ENCODE measurements at regions of chr7 and their contacts with region 1.

Region 1: DNA sequence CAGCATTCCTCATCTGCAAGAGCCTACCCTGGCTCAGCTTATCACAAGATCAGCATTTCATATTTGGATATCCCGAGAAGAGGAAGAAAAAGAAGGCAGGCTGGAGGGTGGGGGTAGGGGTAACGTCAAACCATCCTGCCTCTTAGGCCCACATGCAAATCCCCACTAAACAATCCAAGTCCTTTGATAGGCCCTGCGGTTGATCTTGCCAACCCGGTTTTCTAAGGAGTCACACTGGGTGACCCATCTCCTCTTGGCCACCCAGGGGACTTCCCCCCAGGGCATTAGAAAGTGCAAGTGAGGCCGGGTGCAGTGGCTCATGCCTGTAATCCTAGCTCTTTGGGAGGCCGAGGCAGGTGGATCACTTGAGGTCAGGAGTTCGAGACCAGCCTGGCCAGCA is 128.0 kb upstream of the CALN1 start:
- DNase-seq: no peak
- H3K4me3 ChIP-seq: no peak overlapping the region
- H3K27ac ChIP-seq: no peak overlapping the region
- H3K4me1 ChIP-seq: no peaks in the 10 kb centered on the region
- H3K27me3 ChIP-seq: no peaks in the 10 kb centered on the region
- CTCF ChIP-seq: no peak
- POLR2A ChIP-seq: no peak

Region 2: GRCh38 chr7:72111086-72111485 is 429.1 kb before region 1 on chr7:
- intact Hi-C with region 1: loop called (anchors 5 kb)
- DNase-seq: no peak
- H3K4me3 ChIP-seq: no peak overlapping the region
- H3K27ac ChIP-seq: no peak overlapping the region
- H3K4me1 ChIP-seq: no peaks in the 10 kb centered on the region
- H3K27me3 ChIP-seq: no peaks in the 10 kb centered on the region
- CTCF ChIP-seq: no peak
- POLR2A ChIP-seq: no peak

Measured in breast epithelium (tissue), 4 donors.